ENCODE measurements at regions of chr7 and their contacts with region 1.

Region 1: DNA sequence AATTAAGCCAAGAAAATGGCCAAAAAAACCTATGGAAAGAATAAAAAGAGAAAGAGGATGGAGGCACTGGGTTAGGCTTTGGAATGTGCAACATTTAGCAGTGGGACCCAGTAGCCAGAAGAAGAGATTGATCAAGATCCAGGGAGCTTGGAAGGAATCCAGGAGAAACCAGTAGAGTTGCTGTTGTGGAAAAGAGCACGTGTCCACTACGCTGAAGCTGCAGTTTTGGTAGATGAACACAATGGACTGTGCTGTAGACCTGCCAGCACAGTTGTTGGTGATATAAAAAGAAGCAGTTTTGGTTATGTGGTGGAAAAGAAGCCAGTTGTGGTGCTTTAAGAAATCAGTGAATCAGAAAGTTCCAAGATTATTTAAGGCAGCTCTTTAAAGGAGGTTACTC is 802.2 kb upstream of the POM121L12 start:
- DNase-seq: no peak
- ATAC-seq: no peak
- H3K4me3 ChIP-seq: no peak overlapping the region
- H3K27ac ChIP-seq: no peak overlapping the region
- H3K4me1 ChIP-seq: no peaks in the 10 kb centered on the region
- H3K27me3 ChIP-seq: no peaks in the 10 kb centered on the region
- CTCF ChIP-seq: no peak

Region 2: GRCh38 chr7:51639661-51640334 is 593.5 kb before region 1 on chr7:
- CTCF ChIA-PET with region 1: no interaction called
- POLR2A ChIA-PET with region 1: no interaction called
- in situ Hi-C with region 1: no loop called
- intact Hi-C with region 1: no loop called
- DNase-seq: no peak
- ATAC-seq: no peak
- H3K4me3 ChIP-seq: no peak overlapping the region
- H3K27ac ChIP-seq: no peak overlapping the region
- H3K4me1 ChIP-seq: no peaks in the 10 kb centered on the region
- H3K27me3 ChIP-seq: no peaks in the 10 kb centered on the region
- CTCF ChIP-seq: no peak

Region 3: DNA sequence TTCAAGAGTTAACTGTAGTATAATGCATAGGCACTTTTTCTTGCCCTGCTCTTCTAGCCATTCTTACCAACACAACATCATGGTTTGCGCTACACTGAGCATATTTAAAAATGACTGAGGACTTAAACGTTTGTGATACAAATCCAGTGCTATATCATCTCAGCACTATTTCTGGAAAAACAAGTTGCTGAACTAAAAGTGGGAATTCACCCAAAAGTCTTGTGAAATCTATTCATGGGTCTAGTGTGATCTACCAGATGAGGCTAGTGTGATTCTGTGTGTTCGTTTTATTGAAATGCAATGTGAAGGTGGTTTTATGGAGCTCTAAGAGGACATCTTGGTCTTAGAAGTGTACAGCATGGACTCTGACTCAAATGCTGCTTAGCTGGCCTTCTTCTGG is 217.6 kb after region 1 on chr7:
- CTCF ChIA-PET with region 1: no interaction called
- POLR2A ChIA-PET with region 1: interaction called, 10 read pairs
- in situ Hi-C with region 1: no loop called
- intact Hi-C with region 1: no loop called
- DNase-seq: no peak
- ATAC-seq: no peak
- H3K4me3 ChIP-seq: no peak overlapping the region
- H3K27ac ChIP-seq: no peak overlapping the region
- H3K4me1 ChIP-seq: no peaks in the 10 kb centered on the region
- H3K27me3 ChIP-seq: no peaks in the 10 kb centered on the region
- CTCF ChIP-seq: no peak